ENCODE measurements at regions of chr17 and their contacts with region 1.

Region 1: DNA sequence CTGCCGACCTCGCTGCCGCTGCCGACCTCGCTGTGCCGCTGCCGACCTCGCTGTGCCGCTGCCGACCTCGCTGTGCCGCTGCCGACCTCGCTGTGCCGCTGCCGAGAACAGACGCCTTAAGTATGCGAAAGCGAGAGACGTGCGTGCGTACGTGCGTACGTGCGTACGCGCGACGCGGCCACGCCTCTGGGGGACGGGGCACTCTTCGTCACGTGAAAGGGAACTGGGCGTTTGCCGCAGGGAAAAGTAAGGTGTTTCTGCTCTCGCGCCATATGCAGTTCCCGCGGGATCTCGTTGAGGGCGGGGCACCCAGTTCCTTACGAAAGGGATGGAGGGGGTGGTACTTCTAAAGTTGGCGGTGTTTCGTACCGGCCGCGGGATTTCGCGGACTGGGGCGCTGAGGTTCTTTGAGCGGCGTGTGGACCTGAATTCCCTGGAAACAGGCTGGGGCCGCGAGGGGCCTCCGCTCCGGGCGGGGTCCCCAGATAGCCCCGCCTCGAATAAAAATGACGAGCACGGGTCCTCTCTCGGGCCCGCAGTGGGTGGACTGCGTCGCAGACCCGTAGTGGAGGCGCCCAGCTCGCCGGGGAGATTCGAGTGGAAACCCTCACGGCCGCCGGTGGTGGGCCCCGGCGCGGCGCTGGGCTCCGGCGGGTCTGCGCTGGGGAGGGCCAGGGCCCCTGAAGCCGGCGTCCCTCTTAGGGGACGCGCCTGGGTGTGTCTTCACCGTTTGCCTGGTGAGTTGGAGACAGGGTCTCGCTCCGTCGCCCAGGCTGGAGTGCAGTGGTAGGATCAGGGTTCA is at the start of gene EIF4A3:
- DNase-seq: peak; percentile 99
- H3K4me3 ChIP-seq: peak within 1 kb of the TSS; percentile 79 to 98 (median 94)
- H3K27ac ChIP-seq: peak within 1 kb of the TSS; percentile 93 to 98 (median 96)
- H3K4me1 ChIP-seq: peaks cover 0 to 33% (median 29%) of the 10 kb centered on the region in 4 donors
- H3K27me3 ChIP-seq: no peaks in the 10 kb centered on the region
- CTCF ChIP-seq: no peak
- EP300 ChIP-seq: peak in 3 of 4 donors; percentile 75 to 99 (median 91)
- POLR2A ChIP-seq: peak; percentile 54 to 80
- total RNA-seq, gene EIF4A3: 26.6 to 45.1 (median 39.8) TPM

Region 2: DNA sequence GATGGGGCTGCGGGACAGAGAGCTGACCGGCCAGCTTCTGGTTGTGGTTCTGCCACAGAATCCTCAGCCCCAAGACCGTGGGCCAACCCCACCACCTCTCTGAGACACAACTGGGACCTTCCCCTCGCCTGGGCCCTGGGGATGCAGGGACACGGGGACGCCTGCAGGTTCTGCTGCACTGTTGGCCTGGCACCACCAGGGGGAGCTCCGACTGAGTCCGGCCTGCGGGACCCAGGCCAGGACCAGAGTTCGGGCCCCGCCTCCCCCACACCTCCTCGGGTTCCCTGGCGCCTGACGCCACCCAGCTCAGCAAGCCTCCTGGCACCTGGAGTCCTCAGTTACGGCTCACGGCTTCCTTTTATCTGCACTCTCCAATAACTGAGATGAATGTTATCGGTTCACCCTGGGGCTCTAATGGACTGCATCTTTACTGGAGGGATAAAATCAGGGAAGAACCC is 138.8 kb before region 1 on chr17:
- intact Hi-C with region 1: loop called (anchors 5 kb)
- DNase-seq: peak; percentile 90
- H3K4me3 ChIP-seq: no peak overlapping the region
- H3K27ac ChIP-seq: no peak overlapping the region
- H3K4me1 ChIP-seq: peaks cover 0 to 17% (median 12%) of the 10 kb centered on the region in 4 donors
- H3K27me3 ChIP-seq: no peaks in the 10 kb centered on the region
- CTCF ChIP-seq: peak; percentile 84 to 93 (median 90)
- EP300 ChIP-seq: no peak
- POLR2A ChIP-seq: no peak

Region 3: DNA sequence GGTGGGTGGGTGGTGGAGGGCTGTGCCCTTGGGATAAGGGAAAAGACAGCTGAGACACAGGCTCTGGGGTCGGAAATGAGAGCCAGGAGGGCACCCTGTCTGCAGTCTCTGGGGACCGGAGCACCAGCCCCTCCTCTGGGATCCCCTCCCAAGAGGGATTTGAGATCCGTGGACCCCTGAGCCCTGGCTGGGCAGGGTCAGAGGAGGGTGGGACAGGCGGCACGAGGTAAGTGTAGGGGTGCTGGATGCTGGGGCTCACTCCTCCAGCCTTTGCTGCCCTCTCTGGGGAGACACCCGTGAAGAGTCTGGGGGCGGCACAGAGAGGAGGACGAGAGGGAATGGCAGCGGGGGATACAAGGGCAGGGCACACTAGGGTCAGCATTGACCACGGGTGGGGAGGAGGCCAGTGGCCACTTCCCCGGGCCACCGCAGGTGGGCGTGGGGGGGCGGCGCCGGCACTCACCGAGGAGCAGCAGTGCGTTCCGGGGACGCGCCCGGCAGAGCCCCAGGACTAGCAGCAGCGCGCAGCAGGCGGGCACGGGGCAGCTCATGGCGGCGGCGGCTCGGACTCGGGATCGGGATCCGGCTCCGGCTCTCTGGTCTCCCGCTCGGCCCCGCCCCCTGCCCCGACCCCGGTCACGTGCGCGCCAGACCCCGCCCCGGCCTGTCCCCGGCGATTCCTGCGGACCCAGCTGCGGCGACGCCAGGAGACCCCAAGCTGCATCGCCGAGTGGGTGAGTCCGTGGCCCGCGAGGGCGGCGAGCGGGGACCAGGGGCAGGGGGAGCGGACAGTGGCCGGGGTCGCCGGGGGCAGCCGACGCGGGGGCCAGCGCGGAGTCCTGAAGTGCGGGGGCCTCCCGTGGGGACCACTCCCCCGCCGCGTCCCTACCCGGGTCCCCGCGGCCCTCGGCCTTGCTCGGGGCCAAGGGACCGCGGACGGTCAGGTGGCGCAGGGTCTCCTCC is 72.8 kb after region 1 on chr17 and contains the starts of genes SGSH and SLC26A11:
- intact Hi-C with region 1: loop called (anchors 2 kb)
- DNase-seq: peak; percentile 93
- H3K4me3 ChIP-seq: peak within 1 kb of the TSS; percentile 83 to 100 (median 96)
- H3K27ac ChIP-seq: peak within 1 kb of the TSS; percentile 79 to 89 (median 88)
- H3K4me1 ChIP-seq: peaks cover 0 to 26% (median 21%) of the 10 kb centered on the region in 4 donors
- H3K27me3 ChIP-seq: no peaks in the 10 kb centered on the region
- CTCF ChIP-seq: no peak
- EP300 ChIP-seq: no peak
- POLR2A ChIP-seq: no peak
- total RNA-seq, gene SGSH: 11.4 to 31.6 (median 12.9) TPM
- total RNA-seq, gene SLC26A11: 6.8 to 14.5 (median 11.5) TPM

Region 4: GRCh38 chr17:80263253-80264204 is 116.3 kb after region 1 on chr17:
- intact Hi-C with region 1: loop called (anchors 2 kb)
- DNase-seq: peak; percentile 95
- H3K4me3 ChIP-seq: peak overlapping the region; percentile 18 to 42 (median 39)
- H3K27ac ChIP-seq: peak overlapping the region; percentile 94 to 100 (median 99)
- H3K4me1 ChIP-seq: peaks cover 0 to 41% (median 39%) of the 10 kb centered on the region in 4 donors
- H3K27me3 ChIP-seq: no peaks in the 10 kb centered on the region
- CTCF ChIP-seq: no peak
- EP300 ChIP-seq: no peak
- POLR2A ChIP-seq: no peak

Region 5: DNA sequence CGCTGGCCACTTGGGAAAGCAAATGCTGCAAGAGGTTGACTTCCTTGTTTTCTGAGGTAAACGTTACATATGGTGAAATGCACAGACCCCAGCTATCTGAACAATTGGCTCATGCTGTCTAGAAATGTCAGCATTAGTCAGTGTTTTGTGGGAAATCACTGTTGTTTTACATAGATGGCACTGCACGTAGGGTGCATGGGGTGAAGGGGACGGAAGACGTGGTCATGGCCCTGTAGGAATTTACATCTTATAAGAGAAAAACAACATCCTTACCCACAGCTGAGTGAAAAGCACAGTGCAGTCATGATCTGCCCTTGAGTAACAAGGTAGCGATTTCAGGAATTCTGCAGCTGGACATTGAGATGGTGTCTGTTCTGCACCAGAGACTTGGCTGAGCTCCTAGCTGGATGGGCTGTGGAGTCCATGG is 412.6 kb after region 1 on chr17:
- intact Hi-C with region 1: no loop called
- DNase-seq: no peak
- H3K4me3 ChIP-seq: no peak overlapping the region
- H3K27ac ChIP-seq: no peak overlapping the region
- H3K4me1 ChIP-seq: peaks cover 0 to 7% (median 0%) of the 10 kb centered on the region in 4 donors
- H3K27me3 ChIP-seq: no peaks in the 10 kb centered on the region
- CTCF ChIP-seq: no peak
- EP300 ChIP-seq: no peak
- POLR2A ChIP-seq: no peak